ENCODE measurements at regions of chr4 and their contacts with region 1.

Region 1: GRCh38 chr4:9762823-9763475 is 18.5 kb upstream of the DRD5 start:
- DNase-seq: no peak
- H3K4me3 ChIP-seq: no peak overlapping the region
- H3K27me3 ChIP-seq: no peaks in the 10 kb centered on the region
- CTCF ChIP-seq: peak; percentile 72

Region 2: GRCh38 chr4:9704551-9705332 is 58.2 kb before region 1 on chr4:
- CTCF ChIA-PET with region 1: no interaction called
- POLR2A ChIA-PET with region 1: no interaction called
- DNase-seq: no peak
- H3K4me3 ChIP-seq: no peak overlapping the region
- H3K27me3 ChIP-seq: no peaks in the 10 kb centered on the region
- CTCF ChIP-seq: no peak

Region 3: DNA sequence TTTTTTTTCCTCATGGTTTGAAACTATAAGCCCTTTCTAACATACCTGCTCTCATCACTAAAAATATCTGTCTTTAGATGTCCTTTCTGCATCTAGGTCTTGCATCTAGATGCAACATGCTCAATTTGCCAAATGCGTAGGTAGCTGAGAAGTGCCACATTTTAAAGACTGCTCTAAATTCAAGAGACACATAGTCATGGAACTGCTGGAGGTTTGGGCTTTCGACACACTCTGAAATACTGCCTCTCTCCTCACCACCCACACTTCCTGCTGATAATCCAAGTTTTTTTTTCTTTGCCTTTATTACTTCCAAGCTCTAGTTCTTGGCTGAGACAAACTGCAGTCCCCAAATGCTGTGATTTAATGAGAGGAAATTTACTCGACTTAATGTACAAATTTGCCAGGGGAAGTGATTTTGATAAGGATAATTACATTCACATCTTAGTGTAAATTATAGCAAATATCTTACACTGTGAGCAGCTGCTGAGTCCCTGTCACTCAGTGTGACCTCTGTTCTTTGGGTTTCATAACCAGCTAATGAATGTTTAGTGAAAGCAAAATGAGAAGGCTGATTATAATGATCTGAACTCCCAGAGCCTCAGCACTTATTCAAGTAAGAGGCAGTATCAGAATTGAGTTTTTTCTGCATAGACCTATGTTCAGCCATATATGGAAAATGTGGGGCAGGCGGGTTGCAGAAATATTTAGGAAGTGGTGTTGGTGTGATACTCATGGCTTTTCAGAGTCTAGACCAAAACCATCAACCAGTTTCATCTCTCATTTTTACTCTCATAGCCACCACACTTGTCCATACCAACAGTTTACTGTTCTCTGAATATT is 49.8 kb after region 1 on chr4:
- CTCF ChIA-PET with region 1: no interaction called
- POLR2A ChIA-PET with region 1: no interaction called
- DNase-seq: no peak
- H3K4me3 ChIP-seq: no peak overlapping the region
- H3K27me3 ChIP-seq: no peaks in the 10 kb centered on the region
- CTCF ChIP-seq: no peak

Region 4: GRCh38 chr4:10013722-10014121 is 250.8 kb after region 1 on chr4:
- CTCF ChIA-PET with region 1: interaction called, 59 read pairs
- POLR2A ChIA-PET with region 1: no interaction called
- DNase-seq: no peak
- H3K4me3 ChIP-seq: no peak overlapping the region
- H3K27me3 ChIP-seq: no peaks in the 10 kb centered on the region
- CTCF ChIP-seq: peak; percentile 59

Measured in BJ (cell line).